ENCODE measurements at regions of chr13 and their contacts with region 1.

Region 1: DNA sequence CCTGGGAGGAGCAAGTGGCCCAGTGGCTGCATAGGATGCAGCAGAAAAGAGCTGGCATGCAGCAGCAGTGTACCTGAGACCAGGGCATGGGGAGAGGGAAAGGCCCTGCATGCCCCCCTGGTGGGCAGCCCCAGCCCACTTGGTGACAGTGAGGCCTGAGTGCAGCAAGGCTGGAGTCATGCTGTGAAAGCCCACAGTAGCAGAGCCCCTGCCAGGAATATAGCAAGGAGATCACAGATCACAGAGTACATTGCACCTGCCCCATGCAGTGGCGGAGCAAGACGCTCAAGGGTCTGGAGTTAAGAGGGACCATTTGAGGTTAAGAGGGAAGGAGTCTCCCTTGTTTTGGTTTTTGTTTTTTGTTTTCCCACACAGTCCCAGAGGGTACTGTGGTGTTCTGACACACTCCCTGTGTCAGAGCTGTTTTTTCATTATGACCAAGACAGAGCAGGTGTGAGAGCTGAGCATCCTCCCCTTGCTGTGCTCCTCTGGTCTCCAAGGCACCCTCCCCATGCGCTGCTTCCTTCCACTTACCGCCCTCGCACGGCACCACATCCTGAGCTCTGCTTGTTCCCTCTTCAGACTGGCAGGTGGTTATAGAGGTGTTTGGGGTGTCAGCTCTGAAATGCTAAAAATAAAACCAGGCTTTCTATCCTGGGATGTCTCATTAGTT is 85.0 kb upstream of the UBL3 start:
- DNase-seq: peak; percentile 94
- H3K4me3 Mint-ChIP-seq: peak overlapping the region; percentile 87
- H3K27ac Mint-ChIP-seq: peak overlapping the region; percentile 94
- H3K4me1 Mint-ChIP-seq: peaks cover 47% of the 10 kb centered on the region
- H3K27me3 Mint-ChIP-seq: no peaks in the 10 kb centered on the region

Region 2: GRCh38 chr13:29758531-29759114 is 176.8 kb before region 1 on chr13:
- intact Hi-C with region 1: loop called (anchors 5 kb)
- DNase-seq: peak; percentile 79
- H3K4me3 Mint-ChIP-seq: peak overlapping the region; percentile 19
- H3K27ac Mint-ChIP-seq: peak overlapping the region; percentile 70
- H3K4me1 Mint-ChIP-seq: peaks cover 16% of the 10 kb centered on the region
- H3K27me3 Mint-ChIP-seq: no peaks in the 10 kb centered on the region

Region 3: DNA sequence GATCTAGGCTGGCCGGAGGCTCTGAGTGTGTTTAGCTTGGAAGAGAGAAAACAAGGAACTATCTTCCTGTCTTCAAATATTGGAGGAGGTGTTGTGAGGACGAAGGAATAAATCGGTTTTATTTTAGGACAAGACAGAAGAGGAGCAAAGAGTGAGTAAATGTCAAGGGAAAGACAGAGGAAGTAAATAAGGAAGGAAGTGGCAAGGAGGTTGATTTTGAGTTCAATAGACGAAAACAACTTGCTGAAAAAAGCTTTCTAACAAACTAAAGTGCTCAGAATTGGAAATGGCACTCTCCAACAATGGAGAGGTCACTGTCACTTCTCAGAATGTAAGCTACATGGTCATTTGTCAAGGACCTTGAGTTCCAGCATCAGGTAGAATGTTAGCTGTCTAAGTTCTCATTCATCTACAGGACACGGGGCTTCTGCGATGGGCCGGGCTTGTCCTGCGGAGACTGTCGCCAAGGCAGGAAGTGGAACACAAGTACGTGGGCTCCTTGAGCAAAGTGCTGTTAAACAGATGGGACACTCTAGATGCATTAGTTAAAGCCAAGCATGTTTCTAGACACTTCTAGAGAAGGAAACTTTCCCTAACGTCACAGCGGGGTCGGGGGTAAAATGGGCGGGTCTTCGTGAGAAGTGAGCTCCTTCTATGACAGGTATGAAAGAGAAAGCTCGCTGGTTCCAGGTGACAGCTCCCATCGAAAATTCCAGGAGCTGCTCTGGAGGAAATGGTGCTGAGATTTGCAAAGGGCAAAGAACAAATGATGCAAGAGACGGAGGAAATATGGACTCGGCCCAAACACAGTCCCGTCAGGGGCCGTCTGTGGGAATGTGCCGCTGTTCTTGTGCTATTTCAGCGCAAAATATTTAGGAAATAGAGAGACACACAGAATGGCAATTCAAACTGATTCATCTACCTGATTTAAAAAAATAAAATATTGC is 18.9 kb after region 1 on chr13:
- intact Hi-C with region 1: loop called (anchors 2 kb)
- DNase-seq: peak; percentile 84
- H3K4me3 Mint-ChIP-seq: peak overlapping the region; percentile 86
- H3K27ac Mint-ChIP-seq: peak overlapping the region; percentile 96
- H3K4me1 Mint-ChIP-seq: peaks cover 35% of the 10 kb centered on the region
- H3K27me3 Mint-ChIP-seq: peaks cover 7% of the 10 kb centered on the region

Region 4: DNA sequence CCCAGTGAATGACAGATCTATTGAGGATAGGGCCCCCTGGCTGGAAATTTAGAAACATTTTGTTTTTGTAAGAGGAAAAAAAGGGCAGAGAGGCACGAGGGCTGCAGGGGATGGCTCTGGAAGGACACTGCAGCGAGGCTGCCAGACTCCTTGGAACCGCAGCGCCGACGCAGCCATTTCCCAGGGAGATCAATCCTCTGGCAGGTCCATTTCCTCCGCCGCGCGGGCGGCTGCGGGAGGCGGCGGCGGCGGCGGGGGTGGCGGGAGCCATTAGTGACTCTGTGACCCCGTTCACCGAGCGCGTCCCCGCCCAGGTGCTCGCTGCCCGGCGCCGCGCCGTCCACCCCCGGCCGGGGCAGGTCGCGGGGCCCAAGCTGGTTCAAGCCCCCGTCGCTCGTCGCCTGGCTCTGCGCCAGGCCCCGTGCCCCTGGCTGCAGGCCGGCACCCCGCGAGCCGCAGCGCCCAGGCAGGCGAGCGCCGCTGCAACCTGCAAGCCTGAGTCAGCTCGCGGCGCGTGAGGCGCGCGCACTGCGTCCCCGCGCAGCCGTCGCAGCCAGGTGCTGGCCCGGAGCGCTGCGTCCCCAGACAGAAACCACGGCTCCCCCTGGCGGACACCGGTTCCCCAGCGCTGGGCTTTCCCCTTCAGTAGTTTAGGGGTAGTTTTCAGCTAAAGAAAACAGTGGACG is 179.3 kb after region 1 on chr13:
- intact Hi-C with region 1: loop called (anchors 2 kb)
- DNase-seq: peak; percentile 98
- H3K4me3 Mint-ChIP-seq: peak overlapping the region; percentile 80
- H3K27ac Mint-ChIP-seq: peak overlapping the region; percentile 73
- H3K4me1 Mint-ChIP-seq: peaks cover 37% of the 10 kb centered on the region
- H3K27me3 Mint-ChIP-seq: peaks cover 9% of the 10 kb centered on the region

Region 5: GRCh38 chr13:30422054-30422839 is 486.8 kb after region 1 on chr13 and contains the start of gene UBE2L5:
- intact Hi-C with region 1: no loop called
- DNase-seq: peak; percentile 95
- H3K4me3 Mint-ChIP-seq: peak within 1 kb of the TSS; percentile 89
- H3K27ac Mint-ChIP-seq: peak within 1 kb of the TSS; percentile 86
- H3K4me1 Mint-ChIP-seq: peaks cover 26% of the 10 kb centered on the region
- H3K27me3 Mint-ChIP-seq: no peaks in the 10 kb centered on the region
- total RNA-seq, gene UBE2L5: not detected in 2 replicates

Measured in activated CD4-positive, alpha-beta T cell treated with anti-CD3 and anti-CD28 coated beads, Interleukin-2, amount 10 ng/mL, durations not matched to agents 24 days and 14 days (primary cell).